ENCODE measurements at regions of chr6 and their contacts with region 1.

Region 1: DNA sequence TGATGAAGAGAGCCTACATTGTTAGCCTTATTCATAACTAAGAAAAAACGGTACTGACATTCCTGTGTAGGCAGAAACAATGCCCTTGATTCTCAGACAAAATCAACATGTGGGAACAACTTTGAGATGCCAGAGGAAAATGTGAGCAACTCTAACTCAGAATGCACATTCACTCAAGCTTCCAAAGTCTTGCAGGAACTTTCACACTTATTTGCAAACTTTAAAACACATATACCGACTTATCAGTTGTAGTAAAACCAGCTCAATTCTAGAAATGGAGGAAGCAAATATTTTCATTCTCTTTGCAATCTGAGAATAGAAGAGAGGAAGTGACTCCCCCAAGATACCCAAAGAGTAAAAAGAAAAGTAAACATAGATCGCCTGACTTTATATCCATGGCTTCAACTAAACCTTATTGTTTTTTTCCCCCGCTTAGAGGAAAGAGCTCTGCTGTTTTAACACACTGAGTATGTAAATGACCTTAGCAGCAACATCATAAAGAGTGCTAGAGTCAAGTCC is 117.6 kb downstream of the EPB41L2 start:
- DNase-seq: peak; percentile 89
- H3K4me3 ChIP-seq: peak overlapping the region in 1 of 3 experiments; percentile 20
- H3K27ac ChIP-seq: peak overlapping the region; percentile 69
- H3K4me1 ChIP-seq: peaks cover 30% of the 10 kb centered on the region
- H3K27me3 ChIP-seq: no peaks in the 10 kb centered on the region
- CTCF ChIP-seq: no peak
- POLR2A ChIP-seq: no peak

Region 2: DNA sequence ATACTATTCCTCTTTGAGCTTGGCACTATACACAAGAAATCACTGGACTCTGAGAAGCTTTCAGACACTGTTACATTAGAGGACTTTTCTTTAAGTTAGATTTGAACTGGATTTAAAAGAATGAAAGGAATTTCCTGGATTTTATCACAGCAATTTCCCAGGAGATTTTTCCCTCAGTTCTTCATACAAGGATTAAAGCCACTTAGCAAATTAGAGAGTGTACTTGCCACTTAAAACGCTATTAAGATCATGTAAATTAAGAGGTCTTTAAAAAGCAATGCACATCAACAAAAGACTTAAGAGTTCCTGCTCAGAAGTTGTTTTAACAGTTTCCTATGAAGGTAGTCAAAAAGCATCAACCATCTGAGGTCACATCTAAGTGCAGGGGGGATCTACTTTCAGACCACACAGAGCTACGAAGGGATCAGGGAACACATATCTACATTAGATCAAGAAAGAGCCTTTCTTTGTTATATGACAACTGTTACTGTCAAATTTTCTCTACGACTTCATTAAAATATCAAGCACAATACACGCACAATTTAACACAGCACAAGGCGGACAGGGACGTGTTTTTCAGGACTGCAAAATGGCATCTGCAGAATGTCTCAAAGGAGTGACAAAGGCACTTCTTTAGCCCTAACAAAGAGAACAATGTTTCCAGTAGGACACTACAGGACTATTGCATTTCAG is 51.7 kb after region 1 on chr6:
- CTCF ChIA-PET with region 1: interaction called, 3 read pairs
- POLR2A ChIA-PET with region 1: no interaction called
- dilution Hi-C with region 1: no loop called
- intact Hi-C with region 1: loop called (anchors 2 kb)
- DNase-seq: peak; percentile 74
- H3K4me3 ChIP-seq: no peak overlapping the region
- H3K27ac ChIP-seq: no peak overlapping the region
- H3K4me1 ChIP-seq: peaks cover 23% of the 10 kb centered on the region
- H3K27me3 ChIP-seq: no peaks in the 10 kb centered on the region
- CTCF ChIP-seq: no peak
- POLR2A ChIP-seq: no peak

Measured in endothelial cell of umbilical vein (primary cell).